BJ (cell line): ENCODE measurements at regions of chr4 and their contacts with region 1.

Region 1: GRCh38 chr4:57501720-57502119 is 391.5 kb upstream of the IGFBP7 start:
- DNase-seq: no peak
- H3K4me3 ChIP-seq: no peak overlapping the region
- H3K27me3 ChIP-seq: no peaks in the 10 kb centered on the region; the same call in 1 of the 2 replicates
- CTCF ChIP-seq: no peak

Region 2: DNA sequence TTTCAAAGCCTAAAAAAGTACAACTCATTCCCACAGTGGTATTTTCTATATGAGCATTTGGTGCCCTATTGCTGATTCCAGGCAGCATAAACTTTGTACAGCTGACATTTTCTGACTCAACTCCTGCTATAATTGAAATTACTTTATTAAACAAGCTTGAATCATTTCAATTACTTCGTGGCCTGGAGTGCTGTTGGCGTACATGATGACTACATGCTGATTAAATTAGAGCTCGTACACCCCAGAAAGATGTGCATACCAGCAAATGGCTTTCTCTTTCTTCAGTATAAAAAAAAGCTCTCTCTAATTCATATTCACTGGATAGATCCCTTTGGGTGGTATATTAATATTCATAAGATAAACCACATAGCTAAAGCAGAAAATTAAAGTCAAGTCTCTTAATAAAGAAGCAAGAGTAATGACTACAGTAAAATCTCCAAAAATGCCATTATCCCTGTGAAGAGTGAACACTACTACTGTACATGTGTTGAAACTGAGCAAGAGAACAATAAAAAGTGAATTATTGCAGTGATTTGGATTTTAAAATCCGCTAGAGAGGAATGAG is 146.5 kb before region 1 on chr4:
- CTCF ChIA-PET with region 1: no interaction called
- POLR2A ChIA-PET with region 1: interaction called, 10 read pairs
- DNase-seq: no peak
- H3K4me3 ChIP-seq: no peak overlapping the region
- H3K27me3 ChIP-seq: no peaks in the 10 kb centered on the region
- CTCF ChIP-seq: no peak

Region 3: GRCh38 chr4:57488366-57489162 is 13.2 kb before region 1 on chr4:
- CTCF ChIA-PET with region 1: no interaction called
- POLR2A ChIA-PET with region 1: no interaction called
- DNase-seq: no peak
- H3K4me3 ChIP-seq: no peak overlapping the region
- H3K27me3 ChIP-seq: no peaks in the 10 kb centered on the region
- CTCF ChIP-seq: no peak